ENCODE measurements at regions of chr5 and their contacts with region 1.

Region 1: GRCh38 chr5:152683205-152683604 is 278.1 kb upstream of the NMUR2 start:
- DNase-seq: no peak
- ATAC-seq: no peak

Region 2: DNA sequence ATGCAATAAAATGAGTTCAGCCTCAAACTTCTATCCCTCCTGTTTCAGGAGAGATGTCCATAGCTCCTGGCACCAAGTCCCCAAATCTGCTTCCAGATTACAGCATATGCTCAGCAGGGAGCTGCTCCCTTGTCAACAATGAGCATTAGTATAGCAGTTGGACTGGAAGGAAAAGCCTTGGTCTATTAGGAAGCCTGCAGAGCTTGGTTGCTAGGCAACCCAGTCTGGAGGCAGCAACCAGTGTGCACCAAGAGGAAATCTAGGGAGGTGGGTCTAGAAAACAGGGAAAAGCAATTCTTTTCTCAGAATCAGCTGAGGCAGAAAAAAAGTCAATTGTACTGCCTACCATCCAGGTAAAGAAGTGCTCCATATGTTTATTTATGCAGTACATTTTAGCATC is 48.6 kb before region 1 on chr5:
- intact Hi-C with region 1: loop called (anchors 5 kb)
- DNase-seq: no peak
- ATAC-seq: no peak